Prostate gland (tissue), 2 donors: ENCODE measurements at regions of chr5 and their contacts with region 1.

Region 1: GRCh38 chr5:43484106-43484849 is 613 bp upstream of the TMEM267 start:
- DNase-seq: peak; percentile 81
- H3K4me3 ChIP-seq: peak overlapping the region; percentile 76 to 93
- H3K27ac ChIP-seq: peak overlapping the region; percentile 95 to 96
- H3K4me1 ChIP-seq: no peaks in the 10 kb centered on the region
- H3K27me3 ChIP-seq: no peaks in the 10 kb centered on the region
- CTCF ChIP-seq: peak; percentile 52 to 81 (median 74)
- POLR2A ChIP-seq: no peak

Region 2: DNA sequence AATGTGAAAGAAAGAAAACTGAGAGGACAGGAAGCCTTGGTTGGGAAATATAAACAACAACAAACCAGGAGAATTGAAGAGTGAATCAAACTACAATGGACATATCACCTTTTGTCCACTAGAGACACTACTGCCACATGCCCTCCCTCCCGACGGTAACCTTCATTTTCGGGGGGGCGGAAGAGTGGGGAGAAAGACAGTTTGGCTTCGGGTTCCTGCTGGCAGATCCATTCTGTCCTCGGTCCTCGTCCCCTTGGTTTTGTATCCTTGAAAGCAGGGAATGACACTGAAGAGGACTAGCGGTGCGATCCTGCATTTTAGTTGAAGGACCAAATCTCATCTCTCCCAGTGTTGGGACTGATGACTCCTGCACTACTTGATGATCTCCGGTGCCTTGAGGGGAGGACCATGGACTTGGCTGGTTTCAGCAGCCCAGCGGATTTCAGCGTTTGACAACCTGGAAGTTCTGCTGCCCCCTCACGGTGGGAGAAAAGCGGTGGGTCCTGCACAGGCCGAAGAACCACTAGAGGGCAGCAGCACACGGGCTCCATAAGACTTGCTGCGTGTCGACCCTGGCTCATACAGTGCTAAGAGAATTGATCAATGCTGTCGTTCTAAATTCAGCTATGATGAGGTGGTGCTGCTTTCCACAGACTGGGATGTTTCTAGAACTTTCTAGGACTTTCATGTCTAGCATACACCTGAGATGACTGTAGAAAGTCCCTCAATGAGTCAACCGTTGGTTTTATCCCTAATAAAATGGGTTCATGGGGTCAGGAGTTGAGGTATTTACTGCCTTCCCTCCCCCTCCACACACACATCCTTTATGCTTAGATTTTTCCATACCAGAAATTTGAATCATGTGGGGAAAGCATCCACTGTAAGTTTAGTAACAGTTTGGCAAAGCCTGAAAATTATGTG is 378.6 kb before region 1 on chr5:
- intact Hi-C with region 1: loop called (anchors 5 kb)
- DNase-seq: peak; percentile 89
- H3K4me3 ChIP-seq: peak overlapping the region; percentile 15 to 31
- H3K27ac ChIP-seq: peak overlapping the region; percentile 64 to 73
- H3K4me1 ChIP-seq: no peaks in the 10 kb centered on the region
- H3K27me3 ChIP-seq: no peaks in the 10 kb centered on the region
- CTCF ChIP-seq: peak; percentile 98 to 99 (median 98)
- POLR2A ChIP-seq: no peak

Region 3: DNA sequence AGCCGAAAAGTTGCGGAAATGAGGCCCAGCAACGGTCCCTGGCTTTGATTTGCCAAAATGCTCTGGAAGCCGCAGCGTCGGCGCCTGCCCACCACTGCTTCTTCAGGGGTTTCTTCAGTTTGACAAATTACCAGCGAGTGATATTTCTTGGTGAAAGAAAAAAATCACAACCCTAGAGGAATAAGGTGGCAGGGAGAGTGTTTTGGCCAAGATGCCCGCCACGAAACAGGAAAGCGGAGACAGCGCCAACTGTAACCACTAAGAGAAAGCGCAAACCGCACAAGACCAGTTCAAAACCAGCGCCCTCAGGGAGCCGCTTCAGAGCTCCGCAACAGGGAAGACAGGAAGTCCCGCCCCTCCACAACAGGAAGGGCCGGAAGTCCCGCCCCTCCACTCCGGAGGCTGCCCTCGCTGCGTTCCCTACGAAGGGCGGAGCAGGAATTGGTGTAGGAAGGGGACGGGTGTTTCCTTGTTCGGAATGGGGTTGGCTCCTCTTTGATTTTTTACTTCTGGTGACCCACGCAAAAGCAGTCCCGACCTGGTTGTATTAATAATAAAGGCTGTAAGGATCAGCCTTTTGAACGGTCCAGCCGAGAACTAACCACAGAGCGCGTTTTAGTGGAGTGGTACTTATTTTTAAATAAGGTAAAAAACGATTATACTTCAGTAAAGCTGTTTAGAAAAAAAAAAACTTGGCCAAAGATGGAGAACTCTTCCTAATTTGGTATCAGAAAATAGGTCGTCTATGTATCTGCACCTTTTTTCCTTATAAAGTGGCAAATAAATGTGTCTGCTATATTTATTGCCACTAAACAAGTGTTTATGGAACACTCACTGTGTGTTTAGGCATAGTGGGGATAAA is 30.8 kb after region 1 on chr5 and contains the start of gene C5orf34:
- intact Hi-C with region 1: loop called (anchors 5 kb)
- DNase-seq: peak; percentile 97
- H3K4me3 ChIP-seq: peak within 1 kb of the TSS; percentile 52 to 54
- H3K27ac ChIP-seq: peak within 1 kb of the TSS; percentile 74 to 81
- H3K4me1 ChIP-seq: no peaks in the 10 kb centered on the region
- H3K27me3 ChIP-seq: no peaks in the 10 kb centered on the region
- CTCF ChIP-seq: peak in 1 of 4 experiments; percentile 32
- POLR2A ChIP-seq: peak; percentile 73
- total RNA-seq, gene C5orf34: 1.5 to 4.5 TPM

Region 4: DNA sequence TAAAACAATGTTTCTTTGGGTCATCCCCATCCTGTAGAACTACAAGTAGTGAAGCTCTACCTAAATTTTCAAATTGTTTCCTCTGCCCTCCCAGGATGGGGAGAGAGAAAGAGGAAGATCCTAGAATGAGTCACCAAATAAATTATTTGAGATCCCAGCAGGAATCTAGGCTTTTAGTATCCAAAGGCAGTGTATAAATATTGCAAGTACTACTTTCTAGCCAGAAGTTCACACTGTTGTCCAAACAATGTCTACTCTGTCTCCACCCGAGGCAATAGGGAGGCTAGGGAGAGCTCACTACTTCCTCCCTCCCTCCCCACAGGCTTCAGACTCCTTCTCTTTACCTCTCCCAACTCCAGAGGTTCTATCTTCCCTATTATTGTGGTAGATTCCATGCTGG is 1687.3 kb after region 1 on chr5:
- intact Hi-C with region 1: no loop called
- DNase-seq: no peak
- H3K4me3 ChIP-seq: no peak overlapping the region
- H3K27ac ChIP-seq: no peak overlapping the region
- H3K4me1 ChIP-seq: no peaks in the 10 kb centered on the region
- H3K27me3 ChIP-seq: no peaks in the 10 kb centered on the region
- CTCF ChIP-seq: no peak
- POLR2A ChIP-seq: no peak